ENCODE measurements at regions of chr12 and their contacts with region 1.

Region 1: DNA sequence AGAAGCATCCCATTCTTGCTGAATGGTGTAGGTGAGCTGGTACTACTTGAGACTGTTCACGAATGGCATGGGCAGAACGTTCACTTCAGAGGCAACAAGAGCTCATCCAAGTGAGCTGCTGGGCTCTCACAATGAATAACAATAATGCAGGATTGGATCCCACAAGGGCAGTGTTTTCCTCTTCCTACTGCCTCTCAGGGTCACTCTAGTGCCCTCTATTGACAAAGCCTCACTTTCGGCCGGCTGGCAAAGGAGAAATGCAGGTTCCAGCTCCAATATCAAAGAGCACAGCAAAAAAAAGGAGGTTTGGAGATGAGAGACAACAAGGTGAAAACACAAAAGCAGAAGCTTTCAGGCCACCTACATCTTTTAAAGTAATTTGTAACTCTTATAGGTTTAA is 74.6 kb upstream of the MYF6 start:
- DNase-seq: peak; percentile 56 to 68
- H3K4me3 ChIP-seq: no peak overlapping the region
- H3K27ac ChIP-seq: no peak overlapping the region
- H3K4me1 ChIP-seq: peaks cover 0 to 5% (median 3%) of the 10 kb centered on the region in 4 experiments; a peak in 1 of 7 replicates
- H3K27me3 ChIP-seq: no peaks in the 10 kb centered on the region
- CTCF ChIP-seq: peak; percentile 57 to 83 (median 71)
- EP300 ChIP-seq: no peak
- POLR2A ChIP-seq: no peak
- RAD21 ChIP-seq: peak; percentile 76 to 77

Region 2: DNA sequence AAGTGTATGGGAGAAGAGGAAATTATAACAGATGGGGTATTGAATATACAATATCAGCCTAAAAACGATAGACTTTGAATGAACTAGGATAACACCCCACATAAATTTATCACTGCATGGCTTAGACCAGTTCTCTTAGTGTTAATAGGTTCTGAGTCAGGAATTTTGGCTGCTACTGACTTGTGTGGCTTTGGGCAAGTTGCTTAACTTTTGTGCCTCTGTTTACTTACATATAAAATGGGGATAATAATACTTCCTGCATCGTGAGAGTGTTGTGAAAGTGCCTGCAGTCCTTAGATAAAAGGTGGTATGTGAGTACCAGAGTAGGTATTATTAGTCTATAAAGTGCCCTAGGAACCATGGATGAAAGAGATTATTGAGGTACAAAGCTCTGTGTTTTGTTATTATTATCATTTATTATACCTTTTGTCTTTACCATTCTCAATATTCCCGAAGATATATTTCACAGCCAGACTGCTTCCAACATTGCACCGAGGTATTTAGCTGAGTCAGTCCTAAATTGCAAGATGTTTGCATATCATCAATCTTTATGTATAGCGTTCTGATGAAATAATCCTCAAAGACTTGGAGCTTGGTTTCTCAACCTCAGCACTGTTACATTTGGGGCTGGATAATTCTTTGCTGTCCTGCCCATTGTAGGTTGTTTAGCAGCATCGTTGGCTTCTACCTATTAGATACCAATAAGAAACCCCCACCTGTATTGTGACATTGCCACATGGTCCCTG is 939.8 kb before region 1 on chr12:
- CTCF ChIA-PET with region 1: no interaction called
- POLR2A ChIA-PET with region 1: no interaction called
- DNase-seq: no peak
- H3K4me3 ChIP-seq: peak overlapping the region; percentile 53 to 96 (median 78); a peak in 4 of 8 replicates
- H3K27ac ChIP-seq: no peak overlapping the region
- H3K4me1 ChIP-seq: peaks cover 4 to 8% (median 5%) of the 10 kb centered on the region in 4 experiments; a peak in 6 of 7 replicates
- H3K27me3 ChIP-seq: no peaks in the 10 kb centered on the region
- CTCF ChIP-seq: no peak
- EP300 ChIP-seq: no peak
- POLR2A ChIP-seq: no peak
- RAD21 ChIP-seq: no peak

Region 3: GRCh38 chr12:80607361-80608135 is 25.3 kb before region 1 on chr12:
- CTCF ChIA-PET with region 1: interaction called, 10 read pairs
- POLR2A ChIA-PET with region 1: no interaction called
- DNase-seq: no peak
- H3K4me3 ChIP-seq: no peak overlapping the region
- H3K27ac ChIP-seq: no peak overlapping the region
- H3K4me1 ChIP-seq: no peaks in the 10 kb centered on the region
- H3K27me3 ChIP-seq: no peaks in the 10 kb centered on the region
- CTCF ChIP-seq: peak in 1 of 3 experiments; percentile 37; a peak in 1 of 4 replicates
- EP300 ChIP-seq: no peak
- POLR2A ChIP-seq: no peak
- RAD21 ChIP-seq: peak in 1 of 2 experiments; percentile 28; a peak in 2 of 4 replicates

Region 4: DNA sequence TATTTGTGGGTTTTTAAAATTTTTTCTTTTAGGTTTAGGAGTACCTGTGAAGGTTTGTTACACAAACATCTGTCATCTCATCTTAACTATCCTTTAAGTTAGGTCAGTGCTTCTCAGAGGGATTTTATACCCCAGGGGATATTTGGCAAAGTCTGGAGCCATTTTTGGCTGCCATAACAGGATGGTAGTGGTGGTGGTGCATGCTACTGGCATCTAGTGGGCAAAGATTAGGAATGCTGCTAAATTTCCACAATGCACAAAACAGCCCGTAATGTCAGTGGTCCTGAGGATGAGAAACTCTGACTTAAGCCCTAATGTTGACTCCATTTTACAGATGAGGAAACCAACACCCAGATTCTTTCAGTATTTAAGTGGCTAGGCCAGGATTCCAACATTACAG is 10.6 kb before region 1 on chr12:
- CTCF ChIA-PET with region 1: interaction called, 10 read pairs
- POLR2A ChIA-PET with region 1: interaction called, 3 read pairs
- DNase-seq: no peak
- H3K4me3 ChIP-seq: no peak overlapping the region
- H3K27ac ChIP-seq: no peak overlapping the region
- H3K4me1 ChIP-seq: no peaks in the 10 kb centered on the region; a peak in 1 of 7 replicates
- H3K27me3 ChIP-seq: no peaks in the 10 kb centered on the region
- CTCF ChIP-seq: peak in 2 of 3 experiments; percentile 38 to 46; a peak in 3 of 4 replicates
- EP300 ChIP-seq: no peak
- POLR2A ChIP-seq: no peak
- RAD21 ChIP-seq: peak; percentile 46 to 63

Region 5: GRCh38 chr12:80704420-80704819 is 71.6 kb after region 1 on chr12:
- CTCF ChIA-PET with region 1: interaction called, 11 read pairs
- POLR2A ChIA-PET with region 1: no interaction called
- DNase-seq: no peak
- H3K4me3 ChIP-seq: no peak overlapping the region
- H3K27ac ChIP-seq: no peak overlapping the region
- H3K4me1 ChIP-seq: peaks cover 6 to 9% (median 8%) of the 10 kb centered on the region in 4 experiments
- H3K27me3 ChIP-seq: peaks cover 22 to 44% (median 40%) of the 10 kb centered on the region in 4 experiments
- CTCF ChIP-seq: no peak
- EP300 ChIP-seq: no peak
- POLR2A ChIP-seq: no peak
- RAD21 ChIP-seq: no peak

Region 6: DNA sequence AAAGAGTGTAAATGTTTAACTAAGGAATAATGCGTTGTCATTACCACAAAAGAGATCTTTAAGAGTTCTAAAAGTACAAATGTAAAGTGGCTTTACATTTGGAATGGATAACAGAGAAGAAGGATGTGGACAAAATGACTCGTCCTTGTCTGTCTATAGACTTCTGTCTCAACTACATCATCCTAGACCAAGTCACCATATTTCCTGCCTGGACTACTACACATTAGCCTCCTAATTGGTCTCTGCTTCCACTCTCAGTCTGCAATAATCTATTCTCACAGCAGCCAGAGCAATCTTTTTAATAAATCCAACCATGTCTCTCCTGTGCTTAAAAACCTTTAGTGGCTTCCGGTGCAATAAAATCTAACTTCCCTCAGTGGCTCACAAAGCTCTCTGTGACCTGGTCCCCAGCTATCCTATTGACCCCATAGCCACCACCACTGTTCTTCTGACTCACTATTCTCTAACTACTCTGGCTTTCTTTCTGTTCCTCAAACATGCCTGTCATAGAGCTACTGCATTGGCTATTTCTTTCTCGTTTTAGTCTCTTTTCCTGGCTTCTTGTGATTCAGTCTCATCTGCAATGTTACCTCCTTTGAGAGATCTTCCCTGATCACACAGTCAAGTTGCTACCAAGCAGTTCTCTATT is 174.9 kb after region 1 on chr12:
- CTCF ChIA-PET with region 1: no interaction called
- POLR2A ChIA-PET with region 1: no interaction called
- DNase-seq: no peak
- H3K4me3 ChIP-seq: no peak overlapping the region
- H3K27ac ChIP-seq: no peak overlapping the region
- H3K4me1 ChIP-seq: no peaks in the 10 kb centered on the region
- H3K27me3 ChIP-seq: no peaks in the 10 kb centered on the region
- CTCF ChIP-seq: no peak
- EP300 ChIP-seq: no peak
- POLR2A ChIP-seq: no peak
- RAD21 ChIP-seq: no peak

Measured in H1 (cell line).